Transverse colon (tissue), 4 donors: ENCODE measurements at regions of chr11 and their contacts with region 1.

Region 1: GRCh38 chr11:82261367-82261766 is 472.3 kb downstream of the FAM181B start:
- DNase-seq: no peak
- H3K4me3 ChIP-seq: no peak overlapping the region
- H3K27ac ChIP-seq: no peak overlapping the region
- H3K4me1 ChIP-seq: no peaks in the 10 kb centered on the region
- H3K27me3 ChIP-seq: no peaks in the 10 kb centered on the region
- CTCF ChIP-seq: no peak
- EP300 ChIP-seq: no peak
- POLR2A ChIP-seq: no peak

Region 2: DNA sequence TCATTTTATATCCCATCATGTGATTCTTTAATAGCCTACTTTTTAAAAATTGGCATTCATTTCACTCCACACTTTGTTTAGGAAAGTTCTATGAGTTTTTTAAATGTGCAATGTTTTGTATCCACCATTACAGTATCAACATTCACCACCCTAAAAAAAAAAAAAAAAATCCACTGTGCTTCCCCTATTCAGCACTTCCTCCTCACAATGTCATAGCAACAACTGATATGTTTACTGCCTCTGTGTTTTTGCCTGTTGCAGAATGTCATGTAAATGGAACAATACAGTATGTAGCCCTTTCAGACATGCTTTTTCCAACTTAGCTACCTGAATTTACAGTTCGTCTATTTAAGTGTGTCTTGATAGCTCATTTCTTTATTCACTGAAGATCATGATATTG is 281.9 kb before region 1 on chr11:
- in situ Hi-C with region 1: no loop called
- intact Hi-C with region 1: no loop called
- DNase-seq: no peak
- H3K4me3 ChIP-seq: no peak overlapping the region
- H3K27ac ChIP-seq: no peak overlapping the region
- H3K4me1 ChIP-seq: no peaks in the 10 kb centered on the region
- H3K27me3 ChIP-seq: no peaks in the 10 kb centered on the region
- CTCF ChIP-seq: no peak
- EP300 ChIP-seq: no peak
- POLR2A ChIP-seq: no peak

Region 3: GRCh38 chr11:82356316-82356715 is 94.9 kb after region 1 on chr11:
- in situ Hi-C with region 1: loop called in 1 of 4 experiments (anchors 25 kb)
- intact Hi-C with region 1: no loop called
- DNase-seq: no peak
- H3K4me3 ChIP-seq: no peak overlapping the region
- H3K27ac ChIP-seq: no peak overlapping the region
- H3K4me1 ChIP-seq: no peaks in the 10 kb centered on the region
- H3K27me3 ChIP-seq: no peaks in the 10 kb centered on the region
- CTCF ChIP-seq: no peak
- EP300 ChIP-seq: no peak
- POLR2A ChIP-seq: no peak

Region 4: DNA sequence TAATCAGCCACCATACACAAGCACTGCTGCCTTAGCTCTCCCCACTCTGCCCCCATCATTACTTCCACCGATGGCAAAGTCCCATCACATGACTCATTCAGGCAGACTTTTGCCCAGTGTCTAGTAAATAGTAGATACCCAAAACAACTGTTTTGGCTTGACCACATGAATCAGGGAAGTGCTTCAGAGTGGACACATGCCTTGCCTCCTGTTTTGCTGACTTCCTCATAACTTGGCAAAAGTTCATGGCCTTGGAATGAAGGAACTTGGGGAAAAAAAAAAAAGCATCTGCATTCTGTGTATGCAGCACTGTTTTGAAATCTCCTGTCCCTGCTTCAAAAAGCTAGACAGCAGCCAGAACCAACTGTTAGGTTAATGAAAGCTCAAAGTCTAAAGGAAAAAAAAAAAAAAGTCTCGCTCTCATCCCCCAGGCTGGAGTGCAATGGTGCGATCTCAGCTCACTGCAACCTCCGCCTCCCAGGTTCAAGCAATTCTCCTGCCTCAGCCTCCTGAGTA is 137.0 kb after region 1 on chr11:
- in situ Hi-C with region 1: no loop called
- intact Hi-C with region 1: no loop called
- DNase-seq: no peak
- H3K4me3 ChIP-seq: no peak overlapping the region
- H3K27ac ChIP-seq: no peak overlapping the region
- H3K4me1 ChIP-seq: no peaks in the 10 kb centered on the region
- H3K27me3 ChIP-seq: no peaks in the 10 kb centered on the region
- CTCF ChIP-seq: no peak
- EP300 ChIP-seq: no peak
- POLR2A ChIP-seq: no peak